ENCODE measurements at regions of chr13 and their contacts with region 1.

Region 1: DNA sequence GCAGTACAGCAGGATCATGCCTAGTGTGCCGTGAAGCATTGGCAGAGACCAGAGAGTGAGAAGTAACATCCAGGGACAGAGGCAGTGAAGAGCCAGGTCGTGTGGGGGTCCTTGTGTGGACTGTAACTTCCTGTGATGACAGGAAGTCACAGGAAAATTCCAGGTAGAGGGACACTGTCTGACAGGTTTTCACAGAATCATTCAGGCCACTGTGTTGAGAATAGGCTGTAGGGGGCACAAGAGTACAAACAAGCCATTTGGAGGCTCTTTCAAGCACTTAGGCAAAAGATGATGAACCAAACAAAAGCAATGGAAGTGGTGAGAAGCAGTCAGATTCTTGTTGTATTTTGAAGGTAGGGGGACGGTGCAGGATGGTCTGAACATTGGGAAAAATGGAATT is 46.4 kb downstream of the N4BP2L1 start:
- DNase-seq: peak in 1 of 2 donors; percentile 63
- ATAC-seq: peak in 2 of 3 donors; percentile 72 to 73
- H3K4me3 ChIP-seq: no peak overlapping the region
- H3K4me3 Mint-ChIP-seq: no peak overlapping the region
- H3K27ac ChIP-seq: no peak overlapping the region
- H3K27ac Mint-ChIP-seq: no peak overlapping the region
- H3K4me1 ChIP-seq: no peaks in the 10 kb centered on the region
- H3K4me1 Mint-ChIP-seq: no peaks in the 10 kb centered on the region
- H3K27me3 ChIP-seq: no peaks in the 10 kb centered on the region
- H3K27me3 Mint-ChIP-seq: no peaks in the 10 kb centered on the region
- CTCF ChIP-seq: peak; percentile 53

Region 2: DNA sequence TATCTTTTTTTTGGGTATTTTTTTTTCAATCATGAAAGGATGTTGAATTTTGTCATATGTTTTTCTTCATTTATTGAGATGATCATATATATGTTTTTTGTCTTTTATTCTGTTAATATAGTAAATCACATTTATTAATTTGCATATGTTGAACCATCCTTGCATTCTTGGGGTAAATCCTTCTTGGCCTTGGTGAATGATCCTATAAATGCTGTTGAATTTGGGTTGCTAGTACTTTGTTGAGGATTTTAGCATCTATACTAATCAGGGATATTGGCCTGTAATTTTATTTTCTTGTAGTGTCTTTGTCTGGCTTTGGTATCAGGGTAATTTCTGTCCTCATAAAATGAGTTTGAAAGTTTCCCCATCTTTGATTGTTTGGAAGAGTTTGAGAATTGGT is 981.8 kb before region 1 on chr13:
- intact Hi-C with region 1: no loop called
- DNase-seq: no peak
- ATAC-seq: no peak
- H3K4me3 ChIP-seq: no peak overlapping the region
- H3K4me3 Mint-ChIP-seq: no peak overlapping the region
- H3K27ac ChIP-seq: no peak overlapping the region
- H3K27ac Mint-ChIP-seq: no peak overlapping the region
- H3K4me1 ChIP-seq: no peaks in the 10 kb centered on the region
- H3K4me1 Mint-ChIP-seq: no peaks in the 10 kb centered on the region
- H3K27me3 ChIP-seq: no peaks in the 10 kb centered on the region
- H3K27me3 Mint-ChIP-seq: peaks cover 0 to 12% of the 10 kb centered on the region in 2 donors
- CTCF ChIP-seq: no peak

Region 3: GRCh38 chr13:32261567-32261966 is 120.0 kb before region 1 on chr13:
- intact Hi-C with region 1: no loop called
- DNase-seq: no peak
- ATAC-seq: no peak
- H3K4me3 ChIP-seq: no peak overlapping the region
- H3K4me3 Mint-ChIP-seq: no peak overlapping the region
- H3K27ac ChIP-seq: no peak overlapping the region
- H3K27ac Mint-ChIP-seq: no peak overlapping the region
- H3K4me1 ChIP-seq: no peaks in the 10 kb centered on the region
- H3K4me1 Mint-ChIP-seq: no peaks in the 10 kb centered on the region
- H3K27me3 ChIP-seq: no peaks in the 10 kb centered on the region
- H3K27me3 Mint-ChIP-seq: no peaks in the 10 kb centered on the region
- CTCF ChIP-seq: no peak

Region 4: DNA sequence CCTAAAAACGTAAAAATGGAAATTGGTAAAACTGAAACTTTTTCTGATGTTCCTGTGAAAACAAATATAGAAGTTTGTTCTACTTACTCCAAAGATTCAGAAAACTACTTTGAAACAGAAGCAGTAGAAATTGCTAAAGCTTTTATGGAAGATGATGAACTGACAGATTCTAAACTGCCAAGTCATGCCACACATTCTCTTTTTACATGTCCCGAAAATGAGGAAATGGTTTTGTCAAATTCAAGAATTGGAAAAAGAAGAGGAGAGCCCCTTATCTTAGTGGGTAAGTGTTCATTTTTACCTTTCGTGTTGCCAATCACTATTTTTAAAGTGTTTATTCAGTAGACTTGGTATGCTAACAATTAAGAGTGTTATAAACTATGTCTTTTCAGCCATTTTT is 40.6 kb before region 1 on chr13:
- intact Hi-C with region 1: no loop called
- DNase-seq: no peak
- ATAC-seq: no peak
- H3K4me3 ChIP-seq: no peak overlapping the region
- H3K4me3 Mint-ChIP-seq: no peak overlapping the region
- H3K27ac ChIP-seq: no peak overlapping the region
- H3K27ac Mint-ChIP-seq: no peak overlapping the region
- H3K4me1 ChIP-seq: no peaks in the 10 kb centered on the region
- H3K4me1 Mint-ChIP-seq: no peaks in the 10 kb centered on the region
- H3K27me3 ChIP-seq: no peaks in the 10 kb centered on the region
- H3K27me3 Mint-ChIP-seq: no peaks in the 10 kb centered on the region
- CTCF ChIP-seq: no peak

Region 5: DNA sequence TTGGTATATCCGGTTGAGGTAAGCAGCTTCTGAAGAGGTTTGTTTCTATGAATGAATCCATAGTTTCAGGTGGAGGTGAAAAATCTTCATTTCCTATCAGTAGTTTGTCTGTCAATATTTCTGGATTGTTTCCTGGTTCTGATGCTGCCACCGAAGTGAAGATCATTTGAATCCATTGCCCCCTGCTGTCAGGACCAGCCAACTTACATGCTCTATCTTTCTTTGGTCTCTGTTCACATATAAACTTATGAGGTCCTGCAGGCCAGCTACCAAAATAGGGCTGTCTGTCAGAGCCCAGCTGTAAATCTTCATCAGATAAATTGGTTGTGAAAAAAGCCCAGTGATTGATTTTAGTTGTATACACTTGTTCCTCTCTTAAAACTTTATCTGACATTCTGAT is 61.6 kb after region 1 on chr13:
- intact Hi-C with region 1: loop called (anchors 1 kb)
- DNase-seq: peak in 1 of 2 donors; percentile 76
- ATAC-seq: peak in 2 of 3 donors; percentile 68 to 70
- H3K4me3 ChIP-seq: no peak overlapping the region
- H3K4me3 Mint-ChIP-seq: no peak overlapping the region
- H3K27ac ChIP-seq: no peak overlapping the region
- H3K27ac Mint-ChIP-seq: no peak overlapping the region
- H3K4me1 ChIP-seq: no peaks in the 10 kb centered on the region
- H3K4me1 Mint-ChIP-seq: peaks cover 0 to 5% of the 10 kb centered on the region in 2 donors
- H3K27me3 ChIP-seq: no peaks in the 10 kb centered on the region
- H3K27me3 Mint-ChIP-seq: no peaks in the 10 kb centered on the region
- CTCF ChIP-seq: peak; percentile 46

Region 6: GRCh38 chr13:32581177-32581786 is 199.7 kb after region 1 on chr13:
- intact Hi-C with region 1: loop called (anchors 1 kb)
- DNase-seq: peak in 1 of 2 donors; percentile 54
- ATAC-seq: no peak
- H3K4me3 ChIP-seq: no peak overlapping the region
- H3K4me3 Mint-ChIP-seq: no peak overlapping the region
- H3K27ac ChIP-seq: no peak overlapping the region
- H3K27ac Mint-ChIP-seq: no peak overlapping the region
- H3K4me1 ChIP-seq: peaks cover 7% of the 10 kb centered on the region
- H3K4me1 Mint-ChIP-seq: peaks cover 8 to 9% of the 10 kb centered on the region in 2 donors
- H3K27me3 ChIP-seq: no peaks in the 10 kb centered on the region
- H3K27me3 Mint-ChIP-seq: peaks cover 0 to 6% of the 10 kb centered on the region in 2 donors
- CTCF ChIP-seq: peak; percentile 59

Region 7: GRCh38 chr13:32639502-32640105 is 258.1 kb after region 1 on chr13:
- intact Hi-C with region 1: loop called (anchors 10 kb)
- DNase-seq: peak in 1 of 2 donors; percentile 83
- ATAC-seq: peak; percentile 89 to 97 (median 93)
- H3K4me3 ChIP-seq: no peak overlapping the region
- H3K4me3 Mint-ChIP-seq: no peak overlapping the region
- H3K27ac ChIP-seq: no peak overlapping the region
- H3K27ac Mint-ChIP-seq: no peak overlapping the region
- H3K4me1 ChIP-seq: no peaks in the 10 kb centered on the region
- H3K4me1 Mint-ChIP-seq: peaks cover 26 to 34% of the 10 kb centered on the region in 2 donors
- H3K27me3 ChIP-seq: no peaks in the 10 kb centered on the region
- H3K27me3 Mint-ChIP-seq: no peaks in the 10 kb centered on the region
- CTCF ChIP-seq: peak; percentile 83

Measured in natural killer cell (primary cell).